ENCODE measurements at regions of chr13 and their contacts with region 1.

Region 1: GRCh38 chr13:102845630-102846260 is at the start of gene ERCC5:
- DNase-seq: peak; percentile 96
- H3K4me3 Mint-ChIP-seq: peak within 1 kb of the TSS; percentile 98
- H3K27ac Mint-ChIP-seq: peak within 1 kb of the TSS; percentile 99
- H3K4me1 Mint-ChIP-seq: peaks cover 35% of the 10 kb centered on the region
- H3K27me3 Mint-ChIP-seq: no peaks in the 10 kb centered on the region
- total RNA-seq, gene ERCC5: 46.8 and 57.1 TPM in 2 replicates

Region 2: GRCh38 chr13:102580552-102581169 is 265.1 kb before region 1 on chr13:
- intact Hi-C with region 1: loop called (anchors 1 kb)
- DNase-seq: no peak
- H3K4me3 Mint-ChIP-seq: no peak overlapping the region
- H3K27ac Mint-ChIP-seq: no peak overlapping the region
- H3K4me1 Mint-ChIP-seq: peaks cover 13% of the 10 kb centered on the region
- H3K27me3 Mint-ChIP-seq: peaks cover 24% of the 10 kb centered on the region

Region 3: GRCh38 chr13:102651892-102652291 is 193.9 kb before region 1 on chr13:
- intact Hi-C with region 1: loop called (anchors 5 kb)
- DNase-seq: no peak
- H3K4me3 Mint-ChIP-seq: no peak overlapping the region
- H3K27ac Mint-ChIP-seq: no peak overlapping the region
- H3K4me1 Mint-ChIP-seq: peaks cover 2% of the 10 kb centered on the region
- H3K27me3 Mint-ChIP-seq: no peaks in the 10 kb centered on the region

Region 4: DNA sequence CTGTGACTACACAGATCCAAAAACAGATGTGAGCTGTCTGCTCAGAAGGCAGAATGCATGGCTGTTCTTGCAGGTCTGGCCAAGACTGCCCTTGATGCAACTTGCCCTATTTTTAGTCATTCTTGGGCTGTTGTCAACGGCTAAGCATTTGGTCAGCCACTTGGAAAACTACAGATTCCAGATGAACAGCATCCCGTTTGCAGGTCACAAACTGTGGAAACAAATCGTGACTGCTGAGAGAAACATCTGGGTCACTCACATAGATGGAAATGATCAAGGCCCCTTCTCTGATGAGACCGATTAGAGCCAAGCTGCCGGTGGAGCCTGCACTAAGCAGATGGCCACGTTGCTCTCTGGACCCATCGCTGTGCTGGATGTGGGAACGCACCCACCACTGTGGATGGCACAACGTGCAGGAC is 135.5 kb before region 1 on chr13:
- intact Hi-C with region 1: no loop called
- DNase-seq: no peak
- H3K4me3 Mint-ChIP-seq: no peak overlapping the region
- H3K27ac Mint-ChIP-seq: no peak overlapping the region
- H3K4me1 Mint-ChIP-seq: peaks cover 5% of the 10 kb centered on the region
- H3K27me3 Mint-ChIP-seq: peaks cover 12% of the 10 kb centered on the region

Region 5: DNA sequence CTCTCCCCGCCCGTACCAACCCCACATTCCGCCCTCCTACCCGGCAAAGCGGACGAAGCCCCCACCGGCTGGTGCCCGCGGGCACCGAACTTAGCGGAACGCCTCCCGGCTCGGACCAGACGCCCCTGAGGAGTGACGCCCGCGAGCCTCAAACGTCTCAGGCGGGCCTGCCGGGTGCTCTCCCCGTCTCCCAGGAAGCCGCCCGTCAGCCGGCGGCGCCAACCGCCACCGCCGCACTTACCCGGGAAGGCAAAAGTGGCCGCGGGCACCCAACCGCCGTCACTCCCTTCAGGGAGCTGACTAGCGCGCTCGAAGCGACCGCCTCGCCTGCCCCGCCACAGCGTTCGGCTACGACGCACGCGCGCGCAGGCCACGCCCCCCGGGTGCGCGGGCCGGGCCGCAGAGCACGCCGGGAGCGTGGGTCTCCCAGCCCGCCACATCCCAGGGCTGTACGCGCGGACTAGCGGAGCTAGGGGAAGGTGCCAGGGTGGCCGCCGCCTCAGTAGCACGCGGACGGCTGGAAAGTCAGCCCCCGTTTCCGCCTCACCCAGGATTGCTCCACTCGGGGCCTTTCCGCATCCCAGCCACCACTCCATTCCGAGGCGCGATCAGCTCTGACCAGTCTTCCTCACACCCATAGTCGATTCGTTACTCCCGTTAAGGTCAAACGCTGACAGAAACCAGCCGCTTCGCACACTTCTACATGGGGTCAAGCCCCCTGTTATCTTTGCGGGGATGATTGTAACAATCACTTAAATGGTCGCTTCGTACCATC is 72.1 kb before region 1 on chr13 and contains the start of gene TEX30:
- intact Hi-C with region 1: loop called (anchors 1 kb)
- DNase-seq: peak; percentile 86
- H3K4me3 Mint-ChIP-seq: peak within 1 kb of the TSS; percentile 95
- H3K27ac Mint-ChIP-seq: peak within 1 kb of the TSS; percentile 93
- H3K4me1 Mint-ChIP-seq: peaks cover 53% of the 10 kb centered on the region
- H3K27me3 Mint-ChIP-seq: no peaks in the 10 kb centered on the region
- total RNA-seq, gene TEX30: 54.8 and 58.9 TPM in 2 replicates

Region 6: DNA sequence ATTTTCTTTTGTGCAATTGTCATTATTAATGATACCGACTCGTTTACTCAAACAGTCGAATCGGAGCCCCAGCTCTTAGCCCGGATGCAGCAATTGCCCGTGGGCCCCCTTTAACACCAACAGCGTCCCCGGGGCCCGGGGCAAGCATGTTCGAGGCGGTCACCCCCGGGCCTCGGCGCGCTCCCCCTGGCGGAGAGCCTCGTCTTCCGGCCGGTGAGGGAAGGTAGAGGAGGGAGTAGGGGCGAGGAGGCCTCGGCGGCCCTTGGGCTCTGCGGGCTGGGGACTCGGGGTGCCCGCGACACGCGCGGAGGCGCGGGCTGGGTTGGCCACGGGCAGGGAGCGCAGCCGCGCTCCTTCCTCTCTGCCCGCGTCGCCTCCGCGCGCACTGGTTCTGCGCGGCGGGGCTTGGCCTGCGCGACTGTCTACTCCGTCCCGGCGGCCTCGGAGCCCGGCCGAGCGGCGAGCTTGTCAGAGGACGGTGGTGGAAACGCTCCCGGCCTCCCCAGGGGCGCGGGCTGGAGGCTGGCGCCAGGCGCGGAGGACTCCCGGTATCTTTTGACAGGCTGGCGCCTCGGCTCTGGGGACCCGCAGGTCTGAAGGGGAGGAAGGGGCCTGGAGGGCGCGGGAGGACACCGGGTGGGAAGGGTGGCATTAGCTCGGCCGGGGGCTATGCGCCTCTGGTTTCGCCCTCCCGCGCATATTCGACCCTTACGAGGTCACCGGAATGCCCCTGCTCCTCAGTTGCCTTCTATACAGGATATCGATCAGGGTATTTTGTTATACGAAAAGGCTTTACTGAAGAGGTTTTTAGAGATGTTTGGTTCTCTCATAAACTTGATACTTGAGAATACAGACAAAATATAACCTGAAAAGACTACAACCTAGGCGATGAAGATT is 45.4 kb before region 1 on chr13:
- intact Hi-C with region 1: loop called (anchors 1 kb)
- DNase-seq: peak; percentile 82
- H3K4me3 Mint-ChIP-seq: peak overlapping the region; percentile 95
- H3K27ac Mint-ChIP-seq: peak overlapping the region; percentile 89
- H3K4me1 Mint-ChIP-seq: peaks cover 41% of the 10 kb centered on the region
- H3K27me3 Mint-ChIP-seq: no peaks in the 10 kb centered on the region